ENCODE measurements at regions of chr16 and their contacts with region 1.

Region 1: DNA sequence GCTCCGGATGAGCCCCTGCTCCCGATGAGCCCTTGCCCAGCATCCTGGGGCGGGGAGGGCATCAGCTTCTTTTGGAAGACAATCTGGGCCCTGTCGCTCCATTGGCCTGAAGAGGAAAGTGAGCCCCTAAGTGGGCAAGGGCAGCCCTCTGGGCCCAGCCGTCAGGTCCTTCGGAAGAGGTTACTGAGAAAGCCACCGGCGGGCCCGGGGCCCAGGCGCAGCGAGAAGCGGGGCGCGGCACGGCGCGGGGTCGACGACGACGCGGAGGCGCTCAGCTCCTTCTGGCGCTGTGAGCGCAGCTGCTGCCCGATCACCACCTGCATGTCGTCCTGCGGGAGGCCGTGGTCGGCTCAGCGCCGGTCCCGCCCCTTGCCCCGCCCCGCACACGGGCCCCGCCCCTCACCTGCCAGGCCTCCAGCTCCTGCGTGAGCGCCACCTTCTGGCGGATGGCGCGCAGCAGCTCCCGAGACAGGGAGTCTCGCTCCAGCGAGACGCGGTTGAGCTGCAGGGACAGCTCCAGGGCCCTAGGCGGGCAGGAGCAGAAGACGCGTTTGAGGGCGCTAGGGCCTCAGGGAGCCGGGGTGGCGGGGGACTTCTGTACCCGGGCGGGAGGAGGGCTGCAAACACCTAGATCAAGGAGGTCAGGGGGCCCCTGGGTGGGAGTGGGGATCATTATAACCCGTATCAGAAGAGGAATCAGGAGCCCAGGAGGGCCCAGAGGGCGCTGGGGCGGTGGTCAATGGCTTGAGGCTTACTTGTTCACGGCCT is 4.3 kb downstream of the THOC6 start:
- DNase-seq: peak; percentile 91 to 92 (median 91)
- ATAC-seq: peak; percentile 63 to 82 (median 78)
- H3K4me3 ChIP-seq: peak overlapping the region in 1 of 3 donors; percentile 29
- H3K27ac ChIP-seq: no peak overlapping the region
- H3K4me1 ChIP-seq: peaks cover 0 to 19% (median 5%) of the 10 kb centered on the region in 4 donors
- H3K27me3 ChIP-seq: no peaks in the 10 kb centered on the region
- CTCF ChIP-seq: peak; percentile 73 to 86 (median 84)
- POLR2A ChIP-seq: peak; percentile 20

Region 2: GRCh38 chr16:3003582-3004302 is 24.4 kb before region 1 on chr16:
- intact Hi-C with region 1: loop called in 1 of 2 experiments (anchors 2 kb)
- DNase-seq: peak; percentile 98 to 99 (median 99)
- ATAC-seq: peak; percentile 82 to 92 (median 88)
- H3K4me3 ChIP-seq: peak overlapping the region in 1 of 3 donors; percentile 53
- H3K27ac ChIP-seq: peak overlapping the region in 1 of 3 donors; percentile 83
- H3K4me1 ChIP-seq: peaks cover 0 to 35% (median 18%) of the 10 kb centered on the region in 4 donors
- H3K27me3 ChIP-seq: no peaks in the 10 kb centered on the region
- CTCF ChIP-seq: peak; percentile 46 to 78 (median 58)
- POLR2A ChIP-seq: peak; percentile 81